Activated CD4-positive, alpha-beta memory T cell treated with anti-CD3 and anti-CD28 coated beads for 36 hours (primary cell): ENCODE measurements at regions of chr12 and their contacts with region 1.

Region 1: DNA sequence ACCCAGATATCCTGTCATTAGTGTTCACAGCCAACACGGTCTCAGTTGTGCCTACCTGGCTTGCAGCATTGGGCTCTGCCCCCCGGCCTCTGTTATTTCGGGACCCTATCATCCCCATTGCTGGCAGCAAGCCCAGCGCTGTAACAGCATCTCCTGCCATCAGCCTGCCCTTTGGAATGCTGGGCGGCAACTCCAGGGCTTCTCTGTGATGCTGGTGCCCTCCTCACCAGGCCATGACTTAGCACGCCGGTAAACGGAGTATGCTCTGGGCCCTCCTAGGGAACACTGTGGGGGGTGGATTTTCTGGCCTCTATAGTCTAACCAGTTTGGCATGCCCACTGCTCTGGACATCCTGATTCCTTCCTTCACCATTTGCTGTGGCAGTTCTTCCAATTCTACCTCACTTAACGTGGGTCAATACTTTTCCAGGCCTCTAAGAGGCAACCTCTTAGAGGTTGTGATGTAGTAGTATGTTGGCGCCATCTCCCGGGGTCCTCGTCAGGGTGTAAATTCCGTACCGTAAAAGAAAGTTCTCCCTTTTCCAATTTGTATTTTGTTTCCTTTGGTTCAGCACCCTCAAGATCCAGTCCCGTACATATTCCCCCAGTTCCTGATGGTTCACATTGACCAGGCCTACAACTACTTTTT is 80.0 kb downstream of the SINHCAF start:
- DNase-seq: no peak
- H3K4me3 Mint-ChIP-seq: no peak overlapping the region
- H3K27ac Mint-ChIP-seq: no peak overlapping the region
- H3K4me1 Mint-ChIP-seq: no peaks in the 10 kb centered on the region
- H3K27me3 Mint-ChIP-seq: no peaks in the 10 kb centered on the region

Region 2: GRCh38 chr12:31362759-31363415 is 116.9 kb after region 1 on chr12:
- CTCF ChIA-PET with region 1: interaction called, 3 read pairs
- POLR2A ChIA-PET with region 1: no interaction called
- intact Hi-C with region 1: loop called (anchors 5 kb)
- DNase-seq: peak; percentile 48
- H3K4me3 Mint-ChIP-seq: peak overlapping the region; percentile 9
- H3K27ac Mint-ChIP-seq: peak overlapping the region; percentile 2
- H3K4me1 Mint-ChIP-seq: peaks cover 18% of the 10 kb centered on the region
- H3K27me3 Mint-ChIP-seq: peaks cover 2% of the 10 kb centered on the region

Region 3: GRCh38 chr12:31631784-31632183 is 385.8 kb after region 1 on chr12:
- CTCF ChIA-PET with region 1: interaction called, 3 read pairs
- POLR2A ChIA-PET with region 1: no interaction called
- intact Hi-C with region 1: loop called (anchors 5 kb)
- DNase-seq: no peak
- H3K4me3 Mint-ChIP-seq: no peak overlapping the region
- H3K27ac Mint-ChIP-seq: no peak overlapping the region
- H3K4me1 Mint-ChIP-seq: peaks cover 4% of the 10 kb centered on the region
- H3K27me3 Mint-ChIP-seq: peaks cover 1% of the 10 kb centered on the region